ENCODE measurements at regions of chr2 and their contacts with region 1.

Region 1: DNA sequence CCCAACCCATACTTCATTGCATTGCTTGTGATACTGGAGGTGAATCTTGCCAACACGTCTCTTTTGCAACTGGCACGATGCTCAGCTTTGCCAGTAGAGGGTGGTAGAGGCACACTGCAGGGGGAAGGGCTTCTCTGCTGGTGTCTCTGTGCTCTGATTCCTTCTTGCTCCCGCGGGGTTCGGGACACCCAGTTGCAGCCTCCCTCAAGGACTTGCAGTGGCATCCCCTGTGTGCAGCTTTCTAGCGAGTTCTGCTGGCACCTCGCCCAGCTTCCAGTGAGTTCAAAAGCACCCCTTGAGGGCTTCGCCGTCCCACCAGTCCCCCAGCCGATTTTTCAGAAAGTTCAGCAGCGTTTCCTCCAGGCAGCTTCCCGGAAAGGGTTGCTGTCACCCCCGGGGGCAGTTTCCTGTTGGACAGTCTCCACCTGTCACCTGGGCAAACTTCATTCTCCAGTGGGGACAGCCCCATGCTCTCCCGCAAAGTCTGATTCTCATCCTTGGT is 35.3 kb upstream of the EN1 start:
- DNase-seq: peak; percentile 68 to 74 (median 70)
- ATAC-seq: peak; percentile 85
- H3K4me3 ChIP-seq: no peak overlapping the region
- H3K27ac ChIP-seq: no peak overlapping the region
- H3K4me1 ChIP-seq: peaks cover 6% of the 10 kb centered on the region
- H3K27me3 ChIP-seq: no peaks in the 10 kb centered on the region
- CTCF ChIP-seq: peak; percentile 83 to 97 (median 90)
- POLR2A ChIP-seq: no peak

Region 2: GRCh38 chr2:119011162-119011909 is 128.6 kb after region 1 on chr2:
- intact Hi-C with region 1: no loop called
- DNase-seq: peak; percentile 44 to 70 (median 62)
- ATAC-seq: peak; percentile 86
- H3K4me3 ChIP-seq: no peak overlapping the region
- H3K27ac ChIP-seq: no peak overlapping the region
- H3K4me1 ChIP-seq: peaks cover 7% of the 10 kb centered on the region
- H3K27me3 ChIP-seq: no peaks in the 10 kb centered on the region
- CTCF ChIP-seq: peak; percentile 41 to 80 (median 65)
- POLR2A ChIP-seq: no peak

Region 3: DNA sequence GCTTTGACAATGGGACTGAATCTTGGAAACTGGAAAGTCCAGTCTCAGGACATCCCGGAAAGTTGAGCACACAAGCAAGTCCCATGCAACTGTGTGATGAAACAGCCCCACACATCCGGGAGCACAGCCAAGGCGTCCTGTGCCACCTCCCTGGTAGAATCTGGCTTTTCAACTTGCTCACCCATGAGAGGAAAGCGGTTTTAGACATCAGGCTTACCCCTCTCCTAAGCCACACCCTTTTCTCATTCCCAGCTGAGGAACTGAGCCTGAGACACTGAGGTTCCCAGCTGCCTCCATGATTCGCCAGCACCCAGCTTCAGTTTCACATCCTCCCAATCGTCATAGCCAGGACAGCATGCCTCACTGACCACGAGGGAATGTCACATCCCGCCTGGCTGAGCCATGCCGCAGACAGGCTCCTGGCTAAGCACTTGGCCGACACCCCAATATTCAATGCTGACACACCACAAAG is 401.1 kb after region 1 on chr2:
- intact Hi-C with region 1: loop called (anchors 10 kb)
- DNase-seq: peak in 3 of 4 donors; percentile 28 to 79 (median 49)
- ATAC-seq: peak; percentile 45
- H3K4me3 ChIP-seq: no peak overlapping the region
- H3K27ac ChIP-seq: peak overlapping the region in 1 of 4 donors; percentile 51
- H3K4me1 ChIP-seq: peaks cover 4% of the 10 kb centered on the region
- H3K27me3 ChIP-seq: no peaks in the 10 kb centered on the region
- CTCF ChIP-seq: no peak
- POLR2A ChIP-seq: peak in 1 of 3 donors; percentile 11

Measured in body of pancreas (tissue), 4 donors.